CD8-positive, alpha-beta T cell (primary cell): ENCODE measurements at regions of chr9 and their contacts with region 1.

Region 1: GRCh38 chr9:109119439-109120203 is at the start of gene TMEM245:
- DNase-seq: peak; percentile 87 to 99 (median 94)
- ATAC-seq: peak; percentile 93
- H3K4me3 ChIP-seq: peak within 1 kb of the TSS; percentile 70 to 88
- H3K4me3 Mint-ChIP-seq: peak within 1 kb of the TSS; percentile 93
- H3K27ac ChIP-seq: peak within 1 kb of the TSS; percentile 68 to 85
- H3K27ac Mint-ChIP-seq: peak within 1 kb of the TSS; percentile 89
- H3K4me1 ChIP-seq: peaks cover 42% of the 10 kb centered on the region
- H3K4me1 Mint-ChIP-seq: peaks cover 39% of the 10 kb centered on the region
- H3K27me3 ChIP-seq: no peaks in the 10 kb centered on the region
- H3K27me3 Mint-ChIP-seq: no peaks in the 10 kb centered on the region
- CTCF ChIP-seq: no peak
- total RNA-seq, gene TMEM245: 22.8 to 24.7 TPM

Region 2: DNA sequence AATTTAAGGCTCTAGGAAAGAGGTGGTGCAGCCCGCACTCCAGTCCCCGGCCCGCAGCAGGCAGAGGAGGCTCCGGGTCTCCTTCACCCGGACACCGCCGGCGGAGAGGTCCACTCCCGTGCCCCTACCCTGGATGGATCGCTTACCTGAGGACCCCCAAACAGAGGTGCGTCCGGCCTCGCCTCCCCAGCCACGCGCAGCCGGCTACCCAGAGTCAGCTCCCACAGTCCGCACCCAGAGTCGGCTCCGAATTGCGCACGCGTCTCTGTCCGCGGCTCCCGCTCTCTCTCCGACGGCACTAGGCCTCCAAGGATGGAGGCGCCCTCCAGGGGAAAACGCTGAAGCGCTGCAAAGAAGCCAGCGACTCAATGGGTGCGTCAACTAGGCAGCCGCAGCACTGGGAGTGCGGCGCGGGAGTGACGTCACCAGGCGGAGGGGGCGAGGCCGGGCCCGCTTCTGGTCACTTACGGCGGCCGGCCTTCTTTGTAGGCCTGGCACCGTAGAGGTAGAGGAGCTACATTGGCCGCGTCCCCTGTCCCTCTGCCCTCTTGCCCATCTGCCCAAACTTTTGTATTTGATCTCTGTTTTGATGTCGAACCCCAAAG is 185.8 kb before region 1 on chr9 and contains the start of gene ELP1:
- CTCF ChIA-PET with region 1: no interaction called
- POLR2A ChIA-PET with region 1: interaction called, 3 read pairs
- intact Hi-C with region 1: loop called (anchors 1 kb)
- DNase-seq: peak; percentile 84 to 96 (median 93)
- ATAC-seq: peak; percentile 85
- H3K4me3 ChIP-seq: peak within 1 kb of the TSS; percentile 81 to 95
- H3K4me3 Mint-ChIP-seq: peak within 1 kb of the TSS; percentile 98
- H3K27ac ChIP-seq: peak within 1 kb of the TSS; percentile 92 to 93
- H3K27ac Mint-ChIP-seq: peak within 1 kb of the TSS; percentile 97
- H3K4me1 ChIP-seq: peaks cover 21% of the 10 kb centered on the region
- H3K4me1 Mint-ChIP-seq: peaks cover 52% of the 10 kb centered on the region
- H3K27me3 ChIP-seq: no peaks in the 10 kb centered on the region
- H3K27me3 Mint-ChIP-seq: no peaks in the 10 kb centered on the region
- CTCF ChIP-seq: no peak
- total RNA-seq, gene ELP1: 22.4 to 26.8 TPM

Region 3: DNA sequence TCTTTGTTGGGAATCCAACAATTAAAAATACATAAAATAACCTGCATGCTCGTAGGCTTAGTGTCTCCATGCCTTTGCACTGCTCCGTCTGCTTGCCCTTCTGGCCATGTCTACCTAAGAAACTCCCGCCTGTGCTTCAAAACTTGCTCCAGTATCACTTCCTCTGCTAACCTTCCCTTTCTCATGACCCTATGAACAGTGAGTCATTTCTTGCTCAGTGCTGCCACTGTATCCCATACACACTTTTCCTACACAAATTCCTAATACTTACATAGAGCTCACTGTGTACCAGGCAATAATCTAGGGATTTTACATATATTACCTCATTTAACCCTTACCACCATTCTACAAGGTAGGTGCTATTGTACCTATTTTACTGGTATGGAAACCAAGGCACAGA is 33.4 kb before region 1 on chr9:
- CTCF ChIA-PET with region 1: interaction called, 3 read pairs
- POLR2A ChIA-PET with region 1: interaction called, 4 read pairs
- intact Hi-C with region 1: loop called (anchors 5 kb)
- DNase-seq: no peak
- ATAC-seq: no peak
- H3K4me3 ChIP-seq: no peak overlapping the region
- H3K4me3 Mint-ChIP-seq: no peak overlapping the region
- H3K27ac ChIP-seq: no peak overlapping the region
- H3K27ac Mint-ChIP-seq: no peak overlapping the region
- H3K4me1 ChIP-seq: no peaks in the 10 kb centered on the region
- H3K4me1 Mint-ChIP-seq: peaks cover 7% of the 10 kb centered on the region
- H3K27me3 ChIP-seq: no peaks in the 10 kb centered on the region
- H3K27me3 Mint-ChIP-seq: no peaks in the 10 kb centered on the region
- CTCF ChIP-seq: no peak

Region 4: GRCh38 chr9:109101810-109102209 is 17.8 kb before region 1 on chr9:
- CTCF ChIA-PET with region 1: no interaction called
- POLR2A ChIA-PET with region 1: interaction called, 13 read pairs
- intact Hi-C with region 1: loop called in 1 of 2 experiments (anchors 1 kb)
- DNase-seq: peak in 2 of 9 experiments; percentile 38 to 73
- ATAC-seq: peak; percentile 72
- H3K4me3 ChIP-seq: peak overlapping the region; percentile 21 to 38
- H3K4me3 Mint-ChIP-seq: peak overlapping the region; percentile 73
- H3K27ac ChIP-seq: peak overlapping the region; percentile 54 to 71
- H3K27ac Mint-ChIP-seq: peak overlapping the region; percentile 90
- H3K4me1 ChIP-seq: peaks cover 51% of the 10 kb centered on the region
- H3K4me1 Mint-ChIP-seq: peaks cover 66% of the 10 kb centered on the region
- H3K27me3 ChIP-seq: no peaks in the 10 kb centered on the region
- H3K27me3 Mint-ChIP-seq: no peaks in the 10 kb centered on the region
- CTCF ChIP-seq: no peak

Region 5: DNA sequence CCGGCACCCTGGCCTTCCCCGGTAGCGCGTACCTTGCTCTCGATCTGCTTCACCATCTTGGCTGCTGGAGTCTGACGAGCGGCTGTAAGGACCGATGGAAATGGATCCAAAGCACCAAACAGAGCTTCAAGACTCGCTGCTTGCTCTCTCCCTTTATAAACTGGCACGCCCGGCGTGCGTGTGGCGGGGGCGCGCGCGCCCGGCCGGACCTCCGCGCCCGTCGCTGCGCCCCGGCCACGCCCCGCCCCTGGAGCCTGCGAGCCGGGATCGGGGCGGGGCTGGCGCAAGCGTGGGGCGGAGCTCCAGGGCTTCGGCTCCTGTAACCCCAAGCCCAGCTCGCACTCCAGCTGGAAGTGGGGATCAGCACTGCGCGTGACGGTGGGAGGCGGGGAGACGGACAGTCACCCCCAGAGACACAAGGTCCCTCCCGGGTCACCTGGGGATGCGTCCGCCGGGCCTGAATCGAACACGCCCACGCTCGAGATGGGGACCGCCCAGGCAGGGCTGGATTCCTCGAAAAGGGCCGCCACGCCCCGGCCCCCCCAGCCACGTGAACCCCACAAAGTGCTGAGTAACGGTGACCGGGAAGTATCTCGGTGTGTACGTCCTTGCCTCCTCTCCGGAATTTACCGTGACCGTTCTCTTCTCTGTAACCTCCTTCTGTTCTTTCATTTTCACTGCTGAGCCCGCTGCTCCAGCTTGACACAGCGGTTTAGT is 1136.9 kb after region 1 on chr9 and contains the start of gene TXN:
- CTCF ChIA-PET with region 1: no interaction called
- POLR2A ChIA-PET with region 1: no interaction called
- intact Hi-C with region 1: loop called in 1 of 2 experiments (anchors 5 kb)
- DNase-seq: peak; percentile 60 to 89 (median 78)
- ATAC-seq: peak; percentile 79
- H3K4me3 ChIP-seq: peak within 1 kb of the TSS; percentile 81 to 88
- H3K4me3 Mint-ChIP-seq: peak within 1 kb of the TSS; percentile 96
- H3K27ac ChIP-seq: peak within 1 kb of the TSS; percentile 55 to 68
- H3K27ac Mint-ChIP-seq: peak within 1 kb of the TSS; percentile 86
- H3K4me1 ChIP-seq: peaks cover 4% of the 10 kb centered on the region
- H3K4me1 Mint-ChIP-seq: peaks cover 36% of the 10 kb centered on the region
- H3K27me3 ChIP-seq: no peaks in the 10 kb centered on the region
- H3K27me3 Mint-ChIP-seq: no peaks in the 10 kb centered on the region
- CTCF ChIP-seq: no peak
- total RNA-seq, gene TXN: 16.0 to 18.0 TPM